ENCODE measurements at regions of chr7 and their contacts with region 1.

Region 1: GRCh38 chr7:98202367-98203195 is 8.7 kb upstream of the BHLHA15 start:
- DNase-seq: peak; percentile 39 to 91 (median 78)
- ATAC-seq: peak; percentile 92
- H3K4me3 Mint-ChIP-seq: peak overlapping the region; percentile 81 to 95 (median 90)
- H3K27ac Mint-ChIP-seq: peak overlapping the region; percentile 78 to 98 (median 96)
- H3K4me1 Mint-ChIP-seq: peaks cover 36 to 77% (median 70%) of the 10 kb centered on the region in 4 donors
- H3K27me3 Mint-ChIP-seq: no peaks in the 10 kb centered on the region

Region 2: DNA sequence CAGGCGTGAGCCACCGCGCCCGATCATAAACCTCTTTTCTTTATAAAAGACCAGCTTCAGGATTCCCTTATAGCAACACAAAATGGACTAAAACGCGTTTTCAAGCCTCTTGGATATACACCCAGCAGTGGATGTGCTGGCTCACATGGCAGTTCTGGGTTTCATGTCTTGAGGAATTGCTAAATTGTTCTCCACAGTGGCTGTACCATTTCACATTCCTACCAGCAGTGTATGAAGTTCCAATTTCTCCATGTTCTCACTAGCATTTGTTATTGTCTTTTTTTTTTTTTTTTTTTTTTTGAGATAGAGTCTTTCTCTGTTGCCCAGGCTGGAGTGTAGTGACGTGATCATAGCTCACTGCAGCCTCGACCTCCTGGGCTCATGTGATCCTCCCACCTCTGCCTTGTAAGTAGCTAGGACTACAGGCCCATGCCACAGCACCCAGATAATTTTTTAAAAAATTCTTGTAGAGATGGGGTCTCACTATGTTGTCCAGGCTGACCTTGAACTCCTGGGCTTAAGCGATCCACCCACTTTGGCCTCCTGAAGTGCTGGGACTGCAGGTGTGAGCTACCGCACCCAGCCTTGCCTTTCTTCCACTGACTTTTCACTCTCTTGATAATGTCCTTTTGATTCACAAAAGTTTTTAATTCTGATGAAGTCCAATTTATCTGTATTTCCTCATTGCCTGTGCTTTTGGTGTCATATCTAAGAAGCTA is 32.0 kb after region 1 on chr7:
- POLR2A ChIA-PET with region 1: interaction called, 11 read pairs
- DNase-seq: no peak
- ATAC-seq: no peak
- H3K4me3 Mint-ChIP-seq: no peak overlapping the region
- H3K27ac Mint-ChIP-seq: peak overlapping the region in 1 of 10 donors; percentile 59
- H3K4me1 Mint-ChIP-seq: peaks cover 0 to 4% (median 2%) of the 10 kb centered on the region in 4 donors
- H3K27me3 Mint-ChIP-seq: no peaks in the 10 kb centered on the region

Region 3: DNA sequence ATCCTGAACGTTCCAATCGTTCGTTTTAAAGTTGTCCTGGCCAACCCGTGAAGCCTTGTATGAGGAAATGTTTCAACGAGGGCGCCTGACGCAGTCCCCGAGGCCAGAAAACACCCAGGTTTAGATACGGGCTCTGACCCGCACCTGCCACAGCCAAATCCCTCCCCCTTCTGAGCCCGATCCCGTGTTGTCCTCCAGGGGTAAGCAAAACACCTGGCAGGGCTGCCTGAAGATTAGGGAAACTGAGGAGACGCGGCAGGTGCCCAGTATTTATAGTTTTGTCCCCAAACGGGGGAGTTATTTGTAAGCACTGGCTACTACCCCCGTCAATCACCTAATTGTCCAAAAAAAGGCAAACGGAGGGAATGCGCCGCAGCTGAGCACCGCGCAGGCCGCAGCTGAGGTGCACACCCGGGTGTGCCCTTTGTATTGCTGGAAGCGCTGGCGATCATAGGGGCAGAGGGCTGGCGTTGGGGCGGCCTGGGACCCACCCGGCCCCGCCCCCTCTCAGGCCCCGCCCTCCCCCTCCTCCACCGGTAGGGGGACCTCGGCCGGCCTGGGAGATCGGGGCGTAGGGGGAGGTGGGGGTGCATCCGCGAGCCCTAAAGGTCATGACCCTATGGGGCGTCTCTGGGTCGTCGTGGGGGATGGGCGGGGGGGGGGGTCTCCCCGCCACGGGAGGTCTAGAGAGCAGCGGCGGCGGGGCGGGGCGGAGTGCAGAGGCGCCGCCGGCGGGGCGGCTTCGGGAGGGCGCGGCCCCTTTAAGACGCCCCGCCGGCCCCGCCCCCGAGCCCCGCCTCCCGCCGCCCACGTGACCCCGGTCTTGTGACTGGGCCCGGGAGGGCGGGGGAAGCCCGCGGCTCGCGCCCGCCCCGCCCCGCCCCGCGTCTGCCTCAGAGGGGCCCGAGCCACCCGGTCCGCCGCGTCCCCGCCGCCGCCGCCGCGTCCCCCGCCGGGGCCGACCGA is 78.5 kb after region 1 on chr7 and contains the start of gene BRI3:
- POLR2A ChIA-PET with region 1: interaction called, 13 read pairs
- DNase-seq: peak; percentile 73 to 98 (median 86)
- ATAC-seq: peak; percentile 82
- H3K4me3 Mint-ChIP-seq: peak within 1 kb of the TSS; percentile 82 to 95 (median 87)
- H3K27ac Mint-ChIP-seq: peak within 1 kb of the TSS; percentile 77 to 95 (median 92)
- H3K4me1 Mint-ChIP-seq: peaks cover 17 to 38% (median 34%) of the 10 kb centered on the region in 4 donors
- H3K27me3 Mint-ChIP-seq: no peaks in the 10 kb centered on the region
- polyA plus RNA-seq, gene BRI3: 15.1 to 18.8 (median 15.8) TPM